Activated CD4-positive, alpha-beta memory T cell treated with anti-CD3 and anti-CD28 coated beads, Interleukin-2, amount 10 ng/mL, durations not matched to agents 7 days and 5 days (primary cell): ENCODE measurements at regions of chr6 and their contacts with region 1.

Region 1: DNA sequence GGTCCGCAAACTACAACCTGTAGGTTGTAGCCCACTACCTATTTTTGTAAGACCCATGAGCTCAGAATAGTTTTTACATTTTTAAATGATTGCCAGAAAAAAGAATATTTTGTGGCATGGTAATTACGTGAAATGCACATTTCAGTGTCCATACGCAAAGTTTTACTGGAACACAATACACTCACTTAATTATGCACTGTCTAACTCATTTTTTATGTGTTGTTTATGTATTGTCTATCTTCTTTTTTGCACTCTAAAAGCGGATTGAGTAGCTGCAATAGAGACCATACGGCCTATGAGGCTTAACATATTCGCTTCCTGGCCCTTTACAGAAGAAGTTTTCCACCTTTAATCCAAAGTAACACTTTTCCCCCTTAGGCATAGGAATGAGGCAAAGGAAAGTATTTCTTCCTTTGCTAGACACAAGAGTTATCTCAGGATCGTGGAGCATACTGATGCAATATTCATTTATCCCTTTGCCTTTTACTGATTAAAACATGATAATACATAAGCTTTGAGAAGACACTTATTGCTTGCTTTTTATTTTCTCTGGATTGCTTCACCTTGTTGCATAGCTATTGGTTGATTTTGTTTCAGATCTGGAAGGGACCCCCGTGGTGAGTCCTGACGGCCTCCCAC is 69.8 kb downstream of the FNDC1 start:
- DNase-seq: no peak
- H3K4me3 Mint-ChIP-seq: no peak overlapping the region
- H3K27ac Mint-ChIP-seq: no peak overlapping the region
- H3K4me1 Mint-ChIP-seq: no peaks in the 10 kb centered on the region
- H3K27me3 Mint-ChIP-seq: peaks cover 33% of the 10 kb centered on the region

Region 2: GRCh38 chr6:159252955-159253508 is 14.0 kb after region 1 on chr6:
- CTCF ChIA-PET with region 1: interaction called, 10 read pairs
- POLR2A ChIA-PET with region 1: no interaction called
- DNase-seq: no peak
- H3K4me3 Mint-ChIP-seq: no peak overlapping the region
- H3K27ac Mint-ChIP-seq: no peak overlapping the region
- H3K4me1 Mint-ChIP-seq: no peaks in the 10 kb centered on the region
- H3K27me3 Mint-ChIP-seq: peaks cover 6% of the 10 kb centered on the region

Region 3: DNA sequence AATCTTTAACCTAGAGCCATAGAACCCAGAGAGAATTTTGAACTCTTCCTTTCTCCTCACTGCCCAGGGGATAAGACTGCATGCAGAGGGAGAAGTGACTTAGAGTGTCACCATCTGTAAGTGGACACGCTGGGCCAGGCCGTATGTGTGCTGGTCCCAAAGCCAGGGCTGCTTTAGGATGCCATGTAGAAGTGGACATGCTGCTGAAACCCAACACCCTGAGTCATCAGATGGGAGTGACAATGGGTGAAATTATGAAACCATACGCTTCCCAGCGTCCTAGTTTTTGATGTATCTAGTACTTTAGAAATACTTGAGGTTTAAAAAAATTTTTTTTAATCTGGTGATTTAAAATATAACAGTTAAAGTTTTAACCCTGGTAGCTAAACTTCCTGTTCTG is 121.3 kb after region 1 on chr6:
- CTCF ChIA-PET with region 1: no interaction called
- POLR2A ChIA-PET with region 1: no interaction called
- DNase-seq: no peak
- H3K4me3 Mint-ChIP-seq: no peak overlapping the region
- H3K27ac Mint-ChIP-seq: no peak overlapping the region
- H3K4me1 Mint-ChIP-seq: no peaks in the 10 kb centered on the region
- H3K27me3 Mint-ChIP-seq: peaks cover 7% of the 10 kb centered on the region